AG04449 (cell line): ENCODE measurements at regions of chr21 and their contacts with region 1.

Region 1: GRCh38 chr21:33608559-33608958 is 20.1 kb upstream of the DONSON start:
- DNase-seq: no peak
- H3K4me3 ChIP-seq: no peak overlapping the region
- CTCF ChIP-seq: no peak

Region 2: GRCh38 chr21:33412832-33413519 is 195.6 kb before region 1 on chr21:
- CTCF ChIA-PET with region 1: no interaction called
- POLR2A ChIA-PET with region 1: no interaction called
- DNase-seq: no peak
- H3K4me3 ChIP-seq: no peak overlapping the region
- CTCF ChIP-seq: no peak

Region 3: GRCh38 chr21:33543505-33544129 is 64.9 kb before region 1 on chr21:
- CTCF ChIA-PET with region 1: interaction called, 11 read pairs
- POLR2A ChIA-PET with region 1: no interaction called
- DNase-seq: no peak
- H3K4me3 ChIP-seq: peak overlapping the region; percentile 88
- CTCF ChIP-seq: no peak

Region 4: DNA sequence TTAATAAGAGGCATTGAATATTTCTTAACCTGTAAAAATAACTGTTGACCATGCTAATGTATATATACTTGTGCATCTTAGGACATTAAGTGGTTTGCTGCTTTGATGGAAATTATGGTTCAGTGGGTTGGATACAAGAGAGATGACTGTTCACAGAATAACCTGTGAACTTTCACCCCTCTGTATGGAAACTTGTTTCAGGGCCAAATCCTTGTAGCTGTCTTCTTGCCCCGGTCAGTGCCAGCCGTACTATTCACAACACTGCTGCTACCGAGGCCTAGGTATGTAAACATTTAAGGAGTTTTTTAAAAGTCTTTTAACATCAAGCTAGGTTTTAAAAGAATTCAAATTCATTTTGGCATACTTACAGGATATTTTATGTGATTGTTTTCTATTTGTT is 36.2 kb before region 1 on chr21:
- CTCF ChIA-PET with region 1: interaction called, 23 read pairs
- POLR2A ChIA-PET with region 1: no interaction called
- DNase-seq: no peak
- H3K4me3 ChIP-seq: no peak overlapping the region
- CTCF ChIP-seq: no peak

Region 5: GRCh38 chr21:33588485-33589335 is 19.8 kb before region 1 on chr21 and contains the start of gene DONSON:
- CTCF ChIA-PET with region 1: interaction called, 72 read pairs
- POLR2A ChIA-PET with region 1: no interaction called
- DNase-seq: no peak
- H3K4me3 ChIP-seq: peak within 1 kb of the TSS; percentile 82
- CTCF ChIP-seq: peak; percentile 6

Region 6: GRCh38 chr21:33619726-33620125 is 11.2 kb after region 1 on chr21:
- CTCF ChIA-PET with region 1: interaction called, 78 read pairs
- POLR2A ChIA-PET with region 1: interaction called, 3 read pairs
- DNase-seq: no peak
- H3K4me3 ChIP-seq: no peak overlapping the region
- CTCF ChIP-seq: no peak

Region 7: GRCh38 chr21:33780631-33781030 is 172.1 kb after region 1 on chr21:
- CTCF ChIA-PET with region 1: interaction called, 10 read pairs
- POLR2A ChIA-PET with region 1: no interaction called
- DNase-seq: no peak
- H3K4me3 ChIP-seq: no peak overlapping the region
- CTCF ChIP-seq: no peak

Region 8: DNA sequence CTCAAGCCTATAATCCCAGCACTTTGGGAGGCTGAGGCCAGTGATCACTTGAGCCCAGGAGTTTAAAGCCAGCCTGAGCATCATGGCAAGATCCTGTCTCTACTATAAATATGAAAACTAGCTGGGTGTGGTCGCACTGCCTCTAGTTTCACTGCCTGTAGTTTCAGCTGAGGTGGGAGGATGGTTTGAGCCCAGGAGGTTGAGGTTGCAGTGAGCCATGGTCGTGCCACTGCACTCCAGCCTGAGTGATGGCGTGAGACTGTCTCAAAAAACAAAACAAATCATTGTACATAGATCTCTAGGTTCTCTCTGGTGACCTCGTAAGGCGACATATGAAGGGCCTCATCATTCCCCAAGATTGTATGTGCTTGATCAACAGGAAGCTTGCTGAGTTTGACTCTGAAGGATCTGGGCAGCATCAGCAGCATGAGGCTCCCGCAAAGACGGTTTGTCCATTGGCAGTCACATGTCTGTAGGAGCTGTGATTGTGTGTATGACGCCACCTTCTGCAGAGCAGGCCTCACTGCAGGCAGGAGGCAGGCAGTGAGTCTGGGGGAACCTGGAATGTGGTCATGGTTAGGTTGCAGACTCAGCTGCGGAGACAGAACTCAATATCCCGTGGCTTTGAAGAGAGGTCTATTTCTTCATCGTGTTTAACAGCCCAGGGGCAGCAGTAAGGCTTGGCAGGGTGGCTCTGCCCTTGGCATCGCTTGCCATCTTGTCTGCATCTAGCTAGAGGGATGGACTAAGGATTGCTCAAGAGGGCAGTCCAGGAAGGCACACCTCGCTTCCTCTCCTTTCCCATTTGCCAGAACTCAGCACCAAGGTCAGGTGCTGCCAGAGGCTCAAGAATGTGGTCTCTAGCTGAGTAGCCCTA is 293.1 kb after region 1 on chr21:
- CTCF ChIA-PET with region 1: interaction called, 21 read pairs
- POLR2A ChIA-PET with region 1: no interaction called
- DNase-seq: no peak
- H3K4me3 ChIP-seq: no peak overlapping the region
- CTCF ChIP-seq: peak; percentile 69

Region 9: DNA sequence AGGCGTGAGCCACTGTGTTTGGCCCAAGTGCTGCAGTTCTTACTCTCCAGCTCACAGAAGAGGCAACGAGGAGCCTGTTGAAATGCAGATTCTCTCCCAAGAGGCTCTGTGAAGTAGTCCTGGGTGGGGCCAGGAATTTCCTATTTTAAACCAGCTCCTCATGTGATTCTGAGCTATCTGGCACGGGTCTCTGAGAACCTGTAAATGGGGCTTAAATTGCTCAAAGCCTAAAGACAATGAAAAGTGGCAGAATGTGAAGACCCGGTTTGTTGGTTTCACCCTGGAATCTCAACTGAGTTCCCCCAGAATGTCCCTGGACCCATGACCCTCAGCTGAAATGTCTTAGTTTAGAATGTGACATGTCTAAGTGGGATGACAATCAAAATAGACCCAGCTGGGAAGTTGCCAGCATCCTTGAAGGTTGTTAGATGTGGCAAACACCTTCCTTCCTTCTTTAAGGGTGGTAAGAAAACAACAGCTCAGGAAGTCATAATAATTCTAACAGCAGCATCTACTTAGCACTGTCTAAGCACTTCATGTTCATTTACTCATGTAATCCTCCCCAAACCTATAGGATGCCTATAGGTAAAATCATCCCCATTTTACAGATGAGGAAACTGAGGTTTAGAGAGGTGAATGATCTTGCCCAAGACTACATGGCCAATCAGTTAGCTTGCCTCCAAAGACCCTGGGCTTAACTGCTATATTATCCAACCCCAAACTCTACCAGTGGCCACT is 327.9 kb after region 1 on chr21:
- CTCF ChIA-PET with region 1: no interaction called
- POLR2A ChIA-PET with region 1: no interaction called
- DNase-seq: no peak
- H3K4me3 ChIP-seq: no peak overlapping the region
- CTCF ChIP-seq: no peak